K562 (cell line): ENCODE measurements at regions of chr2 and their contacts with region 1.

Region 1: DNA sequence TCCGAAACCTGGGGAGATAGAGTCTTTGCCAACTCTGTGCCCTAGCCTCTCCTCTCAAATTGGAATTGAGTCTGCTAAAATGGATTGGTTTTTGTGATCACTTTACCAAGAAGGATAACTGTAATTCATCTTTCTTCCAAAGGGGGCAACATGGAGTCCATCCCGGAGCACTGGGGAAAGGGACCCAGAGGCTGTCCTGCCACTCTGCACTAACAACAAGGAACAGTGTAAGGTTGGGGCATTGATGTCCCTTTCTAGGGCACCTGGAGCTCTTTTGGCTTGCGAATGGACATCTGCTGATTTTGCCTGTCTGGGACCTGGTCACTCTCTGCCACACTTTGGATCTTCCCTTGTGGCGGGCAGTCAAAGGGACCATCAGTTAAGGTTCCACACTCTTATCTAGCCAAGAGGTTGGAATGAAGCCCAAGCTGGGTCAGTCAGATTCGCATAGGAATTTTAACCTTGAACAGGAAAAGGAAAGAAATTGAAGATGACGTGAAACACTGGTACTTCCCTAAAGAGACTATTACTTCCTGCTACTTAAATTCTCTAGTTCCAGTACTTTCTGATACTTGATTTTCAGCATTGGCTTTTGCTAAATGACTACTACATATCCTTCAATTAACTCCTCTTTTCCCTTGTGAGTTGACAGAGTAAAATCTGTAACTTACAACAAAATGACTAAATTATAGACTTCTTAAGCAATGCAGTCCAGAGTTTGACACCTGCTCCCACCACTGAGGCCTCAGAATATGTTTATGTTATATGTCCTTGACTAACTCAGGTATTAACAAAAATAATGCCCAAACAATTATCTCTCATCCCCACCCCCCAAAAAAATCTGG is 64.7 kb upstream of the KLF7 start:
- DNase-seq: peak; percentile 55 to 62 (median 58)
- ATAC-seq: peak; percentile 91
- H3K4me3 ChIP-seq: no peak overlapping the region
- H3K27ac ChIP-seq: no peak overlapping the region
- H3K4me1 ChIP-seq: peaks cover 0 to 22% of the 10 kb centered on the region in 2 experiments; a peak in 3 of 5 replicates
- H3K27me3 ChIP-seq: no peaks in the 10 kb centered on the region
- CTCF ChIP-seq: peak; percentile 50 to 77 (median 52)
- EP300 ChIP-seq: no peak
- POLR2A ChIP-seq: no peak
- RAD21 ChIP-seq: peak; percentile 34 to 47

Region 2: DNA sequence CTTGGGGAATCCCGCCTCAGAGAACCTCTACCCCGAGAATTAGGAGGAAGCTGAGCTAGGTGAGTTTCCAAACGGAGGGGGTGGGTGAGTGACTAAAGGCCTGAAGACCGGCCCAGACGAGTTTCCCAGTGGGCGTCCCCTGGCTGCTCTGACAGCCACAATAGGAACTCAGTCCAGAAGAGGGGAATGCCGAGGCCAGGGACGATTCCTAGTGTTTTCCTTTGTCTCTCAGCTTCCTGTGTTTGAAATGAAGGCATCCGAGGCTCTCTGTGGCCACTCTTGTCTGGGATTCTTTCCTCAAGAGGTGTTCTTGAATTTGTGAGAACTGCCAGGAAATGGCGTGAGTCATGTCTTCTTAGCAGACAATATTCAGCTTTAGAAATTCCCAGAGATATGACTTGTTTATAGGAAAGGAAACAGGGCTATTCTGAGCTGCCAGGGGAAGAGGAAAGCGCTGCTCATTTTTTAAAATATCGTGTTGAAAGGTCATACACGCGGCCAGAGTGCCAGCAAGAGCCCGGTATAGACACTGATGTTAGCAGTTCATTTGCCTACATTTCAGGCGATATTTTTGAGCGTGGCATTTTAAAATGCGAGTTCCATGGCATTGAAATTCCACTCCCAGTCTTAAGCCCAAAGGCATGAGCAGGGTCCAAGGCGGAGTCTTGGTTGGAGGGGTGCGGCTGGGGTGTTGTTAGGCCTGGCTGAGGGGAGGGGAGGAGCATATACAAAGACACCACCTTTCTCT is 104.3 kb after region 1 on chr2:
- CTCF ChIA-PET with region 1: no interaction called
- POLR2A ChIA-PET with region 1: no interaction called
- in situ Hi-C with region 1: no loop called
- intact Hi-C with region 1: loop called (anchors 5 kb)
- DNase-seq: peak in 2 of 4 experiments; percentile 22
- ATAC-seq: peak; percentile 60; the same call in 2 of the 3 replicates
- H3K4me3 ChIP-seq: no peak overlapping the region
- H3K27ac ChIP-seq: no peak overlapping the region
- H3K4me1 ChIP-seq: peaks cover 0 to 5% of the 10 kb centered on the region in 2 experiments; a peak in 3 of 5 replicates
- H3K27me3 ChIP-seq: no peaks in the 10 kb centered on the region
- CTCF ChIP-seq: no peak
- EP300 ChIP-seq: no peak
- POLR2A ChIP-seq: no peak
- RAD21 ChIP-seq: no peak